ENCODE measurements at regions of chr3 and their contacts with region 1.

Region 1: DNA sequence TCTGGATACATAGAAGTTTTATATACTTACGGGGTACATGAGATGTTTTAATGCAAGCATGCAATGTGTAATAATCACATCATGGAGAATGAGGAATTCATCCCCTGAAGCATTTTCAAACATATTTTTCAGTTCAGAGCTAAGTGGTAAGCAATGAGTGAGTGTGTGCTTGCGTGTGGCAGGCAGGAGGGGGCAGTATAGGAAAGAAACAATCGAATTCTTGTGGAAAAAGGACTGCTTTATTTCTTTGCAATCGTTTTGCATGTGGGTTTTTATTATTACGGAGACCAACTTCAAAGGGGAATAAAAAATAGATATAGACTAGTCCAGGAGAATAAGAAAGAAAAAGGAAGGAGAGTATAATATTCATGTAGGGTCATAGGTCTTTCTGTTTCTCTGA is 271.6 kb downstream of the CHL1 start:
- DNase-seq: no peak
- ATAC-seq: peak; percentile 48
- H3K4me3 ChIP-seq: no peak overlapping the region
- H3K27ac ChIP-seq: no peak overlapping the region
- H3K4me1 ChIP-seq: peaks cover 7% of the 10 kb centered on the region
- H3K27me3 ChIP-seq: no peaks in the 10 kb centered on the region
- CTCF ChIP-seq: peak; percentile 49 to 71 (median 58)
- EP300 ChIP-seq: no peak
- POLR2A ChIP-seq: no peak
- RAD21 ChIP-seq: peak; percentile 48

Region 2: DNA sequence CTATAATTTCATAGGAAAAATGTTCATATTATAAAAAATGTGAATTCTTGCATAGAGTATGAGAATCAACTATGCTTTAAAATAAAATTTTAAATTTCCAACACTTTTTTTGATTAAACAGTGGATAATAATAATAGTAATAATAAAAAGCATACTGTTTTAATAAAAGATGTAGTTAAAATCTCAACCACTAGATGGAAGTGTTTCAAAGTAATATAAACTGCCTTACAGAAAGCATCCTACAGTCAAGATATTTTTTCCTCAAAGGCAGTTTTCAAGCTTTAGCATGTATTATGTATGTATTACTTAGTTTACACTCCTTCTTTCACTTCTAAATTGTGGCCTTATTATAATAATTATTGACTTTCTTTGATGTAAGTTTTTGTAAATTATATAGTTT is 54.1 kb before region 1 on chr3:
- CTCF ChIA-PET with region 1: interaction called, 5 read pairs
- POLR2A ChIA-PET with region 1: no interaction called
- RAD21 ChIA-PET with region 1: interaction called, 10 read pairs
- SMC1A ChIA-PET with region 1: interaction called, 7 read pairs
- in situ Hi-C with region 1: no loop called
- intact Hi-C with region 1: no loop called
- DNase-seq: no peak
- ATAC-seq: peak; percentile 48; the same call in 2 of the 3 replicates
- H3K4me3 ChIP-seq: no peak overlapping the region
- H3K27ac ChIP-seq: no peak overlapping the region
- H3K4me1 ChIP-seq: no peaks in the 10 kb centered on the region
- H3K27me3 ChIP-seq: no peaks in the 10 kb centered on the region
- CTCF ChIP-seq: peak in 2 of 3 experiments; percentile 14 to 16; a peak in 3 of 6 replicates
- EP300 ChIP-seq: no peak
- POLR2A ChIP-seq: no peak
- RAD21 ChIP-seq: 0 out of 2 replicates have a peak, but pooled peaks have one; percentile 23

Region 3: GRCh38 chr3:454986-455385 is 13.2 kb before region 1 on chr3:
- CTCF ChIA-PET with region 1: interaction called, 10 read pairs
- POLR2A ChIA-PET with region 1: interaction called, 3 read pairs
- RAD21 ChIA-PET with region 1: interaction called, 4 read pairs
- SMC1A ChIA-PET with region 1: interaction called, 11 read pairs
- in situ Hi-C with region 1: no loop called
- intact Hi-C with region 1: no loop called
- DNase-seq: no peak
- ATAC-seq: no peak
- H3K4me3 ChIP-seq: no peak overlapping the region
- H3K27ac ChIP-seq: no peak overlapping the region
- H3K4me1 ChIP-seq: no peaks in the 10 kb centered on the region
- H3K27me3 ChIP-seq: no peaks in the 10 kb centered on the region
- CTCF ChIP-seq: no peak
- EP300 ChIP-seq: no peak
- POLR2A ChIP-seq: no peak
- RAD21 ChIP-seq: no peak

Region 4: GRCh38 chr3:481680-482079 is 13.5 kb after region 1 on chr3:
- CTCF ChIA-PET with region 1: interaction called, 11 read pairs
- POLR2A ChIA-PET with region 1: no interaction called
- RAD21 ChIA-PET with region 1: interaction called, 3 read pairs
- SMC1A ChIA-PET with region 1: interaction called, 4 read pairs
- in situ Hi-C with region 1: no loop called
- intact Hi-C with region 1: no loop called
- DNase-seq: no peak
- ATAC-seq: peak; percentile 83
- H3K4me3 ChIP-seq: no peak overlapping the region
- H3K27ac ChIP-seq: no peak overlapping the region
- H3K4me1 ChIP-seq: no peaks in the 10 kb centered on the region
- H3K27me3 ChIP-seq: no peaks in the 10 kb centered on the region
- CTCF ChIP-seq: peak; percentile 21 to 41 (median 37); a peak in 4 of 6 replicates
- EP300 ChIP-seq: no peak
- POLR2A ChIP-seq: no peak
- RAD21 ChIP-seq: peak; percentile 35; the same call in 1 of the 2 replicates

Region 5: DNA sequence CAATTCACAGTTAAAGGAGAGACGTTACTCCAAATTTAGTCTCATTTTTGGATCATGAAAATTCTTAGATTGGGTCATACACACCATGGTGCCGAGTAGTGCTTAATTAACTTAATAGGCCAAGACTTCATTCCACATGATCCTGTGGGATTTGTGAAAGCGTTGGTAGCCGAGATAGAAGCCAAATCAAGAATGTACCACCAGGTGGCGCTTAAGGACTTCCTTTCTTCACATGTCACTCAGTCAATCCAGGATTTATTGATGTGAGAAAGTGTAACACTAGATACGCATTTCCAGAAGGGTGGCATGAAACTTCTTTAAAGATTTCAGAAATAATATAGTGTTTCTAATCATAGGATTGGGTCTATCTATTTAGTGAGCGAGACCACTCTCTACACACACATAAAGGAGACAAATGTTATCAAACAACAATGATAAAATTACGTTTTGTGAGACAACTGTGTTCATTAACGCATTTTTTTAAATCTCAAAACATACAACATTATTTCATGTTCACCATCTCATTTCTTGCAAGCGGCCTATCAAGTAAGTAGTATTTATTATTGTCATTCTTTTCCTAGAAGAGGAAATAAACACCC is 164.5 kb after region 1 on chr3:
- CTCF ChIA-PET with region 1: interaction called, 5 read pairs
- POLR2A ChIA-PET with region 1: no interaction called
- RAD21 ChIA-PET with region 1: interaction called, 3 read pairs
- SMC1A ChIA-PET with region 1: interaction called, 3 read pairs
- in situ Hi-C with region 1: no loop called
- intact Hi-C with region 1: loop called (anchors 5 kb)
- DNase-seq: no peak
- ATAC-seq: peak; percentile 79
- H3K4me3 ChIP-seq: no peak overlapping the region
- H3K27ac ChIP-seq: no peak overlapping the region
- H3K4me1 ChIP-seq: no peaks in the 10 kb centered on the region
- H3K27me3 ChIP-seq: no peaks in the 10 kb centered on the region
- CTCF ChIP-seq: peak; percentile 63 to 77 (median 68)
- EP300 ChIP-seq: no peak
- POLR2A ChIP-seq: no peak
- RAD21 ChIP-seq: peak; percentile 75

Region 6: GRCh38 chr3:851098-851795 is 383.1 kb after region 1 on chr3:
- CTCF ChIA-PET with region 1: interaction called, 7 read pairs
- POLR2A ChIA-PET with region 1: no interaction called
- RAD21 ChIA-PET with region 1: interaction called, 5 read pairs
- SMC1A ChIA-PET with region 1: interaction called, 11 read pairs
- in situ Hi-C with region 1: no loop called
- intact Hi-C with region 1: no loop called
- DNase-seq: no peak
- ATAC-seq: peak; percentile 94
- H3K4me3 ChIP-seq: no peak overlapping the region
- H3K27ac ChIP-seq: no peak overlapping the region
- H3K4me1 ChIP-seq: no peaks in the 10 kb centered on the region
- H3K27me3 ChIP-seq: no peaks in the 10 kb centered on the region
- CTCF ChIP-seq: peak; percentile 21 to 58 (median 46); a peak in 3 of 6 replicates
- EP300 ChIP-seq: no peak
- POLR2A ChIP-seq: no peak
- RAD21 ChIP-seq: peak; percentile 52; the same call in 1 of the 2 replicates